Transverse colon (tissue), 4 donors: ENCODE measurements at regions of chr10 and their contacts with region 1.

Region 1: GRCh38 chr10:23556727-23557440 is 118.0 kb downstream of the OTUD1 start:
- DNase-seq: no peak
- H3K4me3 ChIP-seq: no peak overlapping the region
- H3K27ac ChIP-seq: no peak overlapping the region
- H3K4me1 ChIP-seq: no peaks in the 10 kb centered on the region
- H3K27me3 ChIP-seq: no peaks in the 10 kb centered on the region
- CTCF ChIP-seq: no peak
- EP300 ChIP-seq: no peak
- POLR2A ChIP-seq: no peak

Region 2: GRCh38 chr10:22670788-22671187 is 886.1 kb before region 1 on chr10:
- in situ Hi-C with region 1: no loop called
- intact Hi-C with region 1: no loop called
- DNase-seq: no peak
- H3K4me3 ChIP-seq: no peak overlapping the region
- H3K27ac ChIP-seq: no peak overlapping the region
- H3K4me1 ChIP-seq: peaks cover 0 to 42% (median 8%) of the 10 kb centered on the region in 4 donors
- H3K27me3 ChIP-seq: no peaks in the 10 kb centered on the region
- CTCF ChIP-seq: no peak
- EP300 ChIP-seq: no peak
- POLR2A ChIP-seq: no peak

Region 3: DNA sequence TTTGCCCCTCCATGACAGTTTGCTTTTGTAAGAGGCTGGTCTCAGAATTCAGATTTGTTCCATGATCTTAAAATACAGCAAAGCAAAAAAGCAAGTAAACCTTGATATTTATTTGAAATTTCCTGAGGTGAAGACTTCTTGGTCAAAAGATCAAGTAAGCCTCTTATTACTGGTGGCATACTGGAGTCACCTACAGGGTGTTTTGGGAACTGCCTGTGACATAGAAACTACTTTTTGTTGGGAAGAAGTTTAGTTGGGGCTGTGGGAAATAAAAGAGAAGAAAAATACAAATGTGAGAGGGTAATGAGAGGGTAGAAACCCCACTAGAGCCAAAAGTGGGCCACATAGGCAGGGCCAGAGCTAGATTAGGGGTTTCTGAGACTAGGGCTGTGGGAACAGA is 99.9 kb after region 1 on chr10:
- in situ Hi-C with region 1: loop called in 1 of 4 experiments (anchors 25 kb)
- intact Hi-C with region 1: no loop called
- DNase-seq: no peak
- H3K4me3 ChIP-seq: no peak overlapping the region
- H3K27ac ChIP-seq: no peak overlapping the region
- H3K4me1 ChIP-seq: no peaks in the 10 kb centered on the region
- H3K27me3 ChIP-seq: no peaks in the 10 kb centered on the region
- CTCF ChIP-seq: peak in 3 of 5 experiments; percentile 14 to 26 (median 19)
- EP300 ChIP-seq: no peak
- POLR2A ChIP-seq: no peak